AG04449 (cell line): ENCODE measurements at regions of chr5 and their contacts with region 1.

Region 1: GRCh38 chr5:150449517-150450339 is at the start of gene RPS14:
- DNase-seq: peak; percentile 52
- H3K4me3 ChIP-seq: peak within 1 kb of the TSS; percentile 68
- CTCF ChIP-seq: peak; percentile 93

Region 2: GRCh38 chr5:150389531-150390266 is 60.0 kb before region 1 on chr5:
- CTCF ChIA-PET with region 1: no interaction called
- POLR2A ChIA-PET with region 1: no interaction called
- DNase-seq: no peak
- H3K4me3 ChIP-seq: no peak overlapping the region
- CTCF ChIP-seq: no peak

Region 3: DNA sequence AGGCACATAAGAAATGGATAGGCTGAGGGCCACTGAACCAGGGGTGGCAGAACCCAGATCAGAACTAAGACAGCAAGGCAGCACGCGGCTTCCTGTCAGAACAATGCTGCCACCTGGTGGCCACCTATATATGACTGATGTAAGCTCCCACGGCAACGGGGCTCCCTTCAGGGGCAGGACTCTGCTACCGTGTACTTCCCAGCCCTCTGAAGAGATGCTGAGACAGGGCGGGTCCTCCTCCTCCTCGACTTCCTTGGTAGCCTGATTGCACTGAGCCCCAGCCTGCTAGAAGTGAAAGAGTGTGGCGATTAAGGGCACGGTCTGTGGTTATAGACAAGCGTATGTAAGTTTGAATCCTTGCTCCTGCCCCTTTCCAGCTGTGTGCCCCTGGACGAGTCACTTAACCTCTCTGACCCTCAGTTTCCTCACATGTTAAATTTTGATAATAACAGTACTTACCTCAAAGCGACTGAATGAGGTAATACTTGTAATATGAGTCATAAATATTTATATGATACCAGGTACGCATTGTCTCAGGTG is 13.5 kb before region 1 on chr5:
- CTCF ChIA-PET with region 1: interaction called, 14 read pairs
- POLR2A ChIA-PET with region 1: interaction called, 3 read pairs
- DNase-seq: peak; percentile 14
- H3K4me3 ChIP-seq: no peak overlapping the region
- CTCF ChIP-seq: peak; percentile 83

Region 4: GRCh38 chr5:150464554-150465012 is 14.9 kb after region 1 on chr5:
- CTCF ChIA-PET with region 1: interaction called, 39 read pairs
- POLR2A ChIA-PET with region 1: interaction called, 5 read pairs
- DNase-seq: no peak
- H3K4me3 ChIP-seq: no peak overlapping the region
- CTCF ChIP-seq: no peak

Region 5: GRCh38 chr5:150523472-150524350 is 74.0 kb after region 1 on chr5:
- CTCF ChIA-PET with region 1: interaction called, 19 read pairs
- POLR2A ChIA-PET with region 1: no interaction called
- DNase-seq: no peak
- H3K4me3 ChIP-seq: no peak overlapping the region
- CTCF ChIP-seq: peak; percentile 69

Region 6: DNA sequence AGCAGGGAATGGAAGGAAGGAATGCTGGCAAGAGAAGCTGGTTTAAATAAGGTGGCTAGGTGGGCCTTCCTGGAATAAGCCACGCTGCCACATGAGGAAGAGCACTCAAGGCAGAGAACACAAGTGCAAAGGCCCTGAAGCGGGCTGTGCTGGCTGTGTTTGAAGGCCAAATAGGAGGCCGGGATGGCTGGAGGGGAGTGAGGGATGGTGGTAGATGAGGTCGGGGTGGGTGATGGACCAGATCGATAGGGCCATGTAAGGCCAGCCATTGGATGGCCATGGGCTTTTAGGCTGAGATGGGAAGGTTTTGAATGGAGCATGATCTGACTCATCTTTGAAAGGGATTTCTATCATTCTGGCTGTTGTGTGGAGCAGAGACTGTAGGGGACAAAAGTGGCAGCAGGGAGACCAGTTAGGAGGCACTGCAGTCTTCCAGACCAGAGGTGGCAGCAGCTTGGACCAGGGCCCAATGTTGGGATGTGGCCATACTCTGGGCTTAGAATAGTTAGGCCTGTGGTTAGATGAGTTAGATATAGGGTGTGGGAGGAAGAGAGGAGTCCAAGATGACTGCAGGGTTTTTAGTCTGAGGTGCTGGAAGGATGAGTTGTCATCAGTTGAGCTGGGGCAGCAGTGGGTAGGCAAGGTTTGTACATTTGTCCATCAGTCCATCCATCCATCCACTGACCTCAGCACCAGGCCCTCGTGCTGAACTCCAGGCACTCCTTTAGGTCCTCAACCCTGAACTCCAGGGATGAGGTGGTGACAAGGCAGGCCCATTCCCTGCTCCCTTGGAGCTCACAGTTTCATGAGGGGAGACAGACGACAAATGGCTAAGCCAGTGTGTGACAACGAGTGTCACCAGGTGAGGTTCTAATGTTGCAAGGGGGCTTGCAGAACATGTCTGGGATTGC is 88.5 kb after region 1 on chr5:
- CTCF ChIA-PET with region 1: interaction called, 12 read pairs
- POLR2A ChIA-PET with region 1: interaction called, 3 read pairs
- DNase-seq: no peak
- H3K4me3 ChIP-seq: no peak overlapping the region
- CTCF ChIP-seq: no peak

Region 7: DNA sequence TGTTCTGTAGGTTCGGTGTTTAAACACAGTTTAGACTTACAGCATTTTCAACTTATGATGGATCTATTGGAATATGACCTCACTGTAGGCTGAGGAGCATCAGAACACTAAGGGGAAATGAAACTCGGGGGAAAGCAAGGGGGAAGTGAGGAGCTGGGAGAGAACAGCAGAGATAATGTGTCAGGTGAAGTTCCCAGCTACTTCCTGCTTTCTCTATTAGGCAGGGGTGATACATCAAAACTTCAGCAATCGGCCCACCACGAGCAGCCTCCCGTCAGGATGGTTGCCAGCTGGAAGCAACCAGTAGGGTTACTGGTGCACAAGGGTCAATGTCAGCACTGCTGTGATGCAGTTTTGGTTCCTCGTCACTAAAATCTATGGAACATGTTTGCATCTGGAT is 1107.1 kb after region 1 on chr5:
- CTCF ChIA-PET with region 1: no interaction called
- POLR2A ChIA-PET with region 1: no interaction called
- DNase-seq: no peak
- H3K4me3 ChIP-seq: no peak overlapping the region
- CTCF ChIP-seq: no peak